ENCODE measurements at regions of chr14 and their contacts with region 1.

Region 1: DNA sequence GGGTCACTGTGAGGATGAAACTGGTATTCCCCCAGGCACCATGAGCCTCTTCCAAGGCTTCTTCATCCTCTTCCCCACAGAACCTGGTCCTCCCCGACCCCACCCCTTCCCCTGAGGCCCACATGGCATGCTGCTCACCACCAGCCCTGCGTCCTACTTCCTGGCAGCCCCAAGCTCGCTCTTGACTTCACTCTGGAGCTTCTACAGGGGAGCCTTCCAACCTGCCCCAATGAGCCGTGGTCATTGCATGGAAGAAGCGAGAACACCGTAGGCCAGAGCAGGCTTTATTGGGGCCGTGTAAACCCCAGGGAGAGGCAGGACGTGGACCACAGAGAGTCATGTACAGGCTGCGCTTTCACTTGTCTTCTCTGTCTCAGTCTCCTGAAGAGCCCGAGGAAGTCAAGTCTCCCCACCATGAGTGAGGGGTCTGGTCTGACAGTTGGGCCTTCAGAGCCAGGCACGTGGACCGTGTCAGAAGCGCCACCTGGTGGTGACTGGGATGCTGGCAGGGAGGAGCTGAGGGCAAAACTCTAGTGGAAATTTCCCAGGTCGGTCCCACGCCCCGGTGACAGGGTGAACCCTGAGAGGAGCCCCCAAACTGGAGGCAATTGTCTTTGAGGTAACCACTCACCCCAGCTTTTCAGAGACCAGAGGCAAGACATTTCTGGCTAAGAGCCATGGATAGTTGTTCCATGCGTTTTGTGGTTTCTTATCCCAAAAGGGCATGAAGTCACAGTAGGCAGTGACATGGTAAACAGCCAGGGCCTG is 17.5 kb downstream of the RPS6KL1 start:
- DNase-seq: peak; percentile 51 to 60
- ATAC-seq: peak; percentile 33 to 74; a peak in 3 of 6 replicates
- H3K4me3 ChIP-seq: no peak overlapping the region
- H3K27ac ChIP-seq: peak overlapping the region in 1 of 2 experiments; percentile 44; a peak in 1 of 6 replicates
- H3K4me1 ChIP-seq: no peaks in the 10 kb centered on the region; the same call in 2 of the 3 replicates
- CTCF ChIP-seq: peak; percentile 85
- EP300 ChIP-seq: no peak
- POLR2A ChIP-seq: no peak
- RAD21 ChIP-seq: peak; percentile 57 to 60; a peak in 4 of 5 replicates

Region 2: DNA sequence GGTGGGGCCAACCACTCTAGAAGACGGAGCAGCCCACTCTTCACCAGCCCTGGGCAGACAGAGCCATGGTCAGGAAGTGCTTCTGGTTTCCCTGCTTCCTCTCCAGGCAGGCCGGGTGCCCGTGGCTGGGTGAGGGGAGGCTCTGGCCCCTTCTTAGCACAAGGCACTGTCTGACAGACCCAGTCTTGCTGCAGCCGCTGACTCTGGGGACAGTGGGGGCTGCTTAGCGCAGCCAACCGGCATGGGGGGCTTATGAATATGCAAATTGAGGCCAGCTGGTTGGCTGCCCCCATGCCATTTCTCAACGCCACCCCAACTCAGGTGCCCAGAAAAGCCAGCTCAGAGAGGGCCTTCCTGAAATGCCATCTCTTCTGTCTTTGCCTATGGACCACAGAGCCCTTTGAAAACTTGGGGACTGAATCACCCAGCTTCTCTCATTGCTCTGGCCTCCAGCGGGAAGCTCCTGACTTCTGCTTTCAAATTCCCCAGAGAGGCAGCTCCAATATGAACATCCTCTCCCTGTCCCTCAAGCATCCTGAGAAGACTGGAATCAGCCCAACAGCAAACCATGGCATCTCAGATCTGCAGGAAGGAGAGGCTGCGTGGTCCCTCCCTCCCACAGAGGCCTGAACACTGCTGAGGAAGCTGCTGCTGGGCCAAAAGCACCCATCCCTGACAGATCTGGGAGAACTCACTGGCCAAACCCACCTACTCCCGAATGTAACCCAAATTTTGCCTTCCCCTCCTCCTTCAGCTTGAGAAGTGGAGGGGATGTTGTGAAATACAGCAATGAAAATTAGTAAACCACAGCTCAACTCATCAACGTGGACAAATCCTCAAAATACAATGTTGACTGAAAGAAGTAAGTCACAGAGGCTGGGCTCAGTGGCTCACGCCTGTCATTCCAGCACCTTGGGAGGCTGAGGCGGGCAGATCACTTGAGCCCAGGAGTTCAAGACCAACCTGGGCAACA is 29.3 kb before region 1 on chr14 and contains the start of gene PROX2:
- CTCF ChIA-PET with region 1: interaction called, 77 read pairs
- POLR2A ChIA-PET with region 1: no interaction called
- DNase-seq: no peak
- ATAC-seq: no peak
- H3K4me3 ChIP-seq: no peak within 1 kb of the TSS
- H3K27ac ChIP-seq: no peak within 1 kb of the TSS
- H3K4me1 ChIP-seq: peaks cover 16% of the 10 kb centered on the region
- CTCF ChIP-seq: no peak
- EP300 ChIP-seq: no peak
- POLR2A ChIP-seq: no peak
- RAD21 ChIP-seq: no peak
- polyA plus RNA-seq, gene PROX2: not detected in 2 replicates

Region 3: GRCh38 chr14:74893614-74894091 is 11.9 kb before region 1 on chr14:
- CTCF ChIA-PET with region 1: interaction called, 173 read pairs
- POLR2A ChIA-PET with region 1: interaction called, 3 read pairs
- DNase-seq: no peak
- ATAC-seq: no peak
- H3K4me3 ChIP-seq: no peak overlapping the region
- H3K27ac ChIP-seq: no peak overlapping the region
- H3K4me1 ChIP-seq: peaks cover 3% of the 10 kb centered on the region
- CTCF ChIP-seq: no peak
- EP300 ChIP-seq: no peak
- POLR2A ChIP-seq: no peak
- RAD21 ChIP-seq: no peak

Region 4: DNA sequence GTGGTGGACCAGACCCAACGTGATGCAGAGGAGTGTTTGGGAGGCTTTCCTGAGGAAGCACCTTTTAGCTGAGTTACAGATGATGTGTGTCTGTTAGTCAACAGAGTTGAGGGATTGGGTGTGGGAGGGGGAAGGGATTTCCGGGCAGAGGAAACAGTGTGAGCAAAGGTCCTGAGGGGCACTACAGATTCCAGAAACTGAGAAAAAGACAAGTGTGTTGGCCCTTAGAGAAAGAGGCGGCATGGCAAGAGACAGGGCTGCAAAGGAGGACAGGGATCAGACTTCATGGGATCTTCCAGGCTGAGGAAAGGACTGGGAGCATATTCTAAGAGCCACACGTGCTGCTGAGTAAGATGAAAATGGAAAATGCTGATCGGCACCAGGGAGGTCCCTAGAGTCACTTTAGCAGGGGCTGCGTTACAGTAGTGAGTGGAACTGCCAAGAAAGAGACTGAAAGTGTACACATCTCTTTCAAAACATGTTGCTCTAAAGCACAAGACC is 26.9 kb after region 1 on chr14:
- CTCF ChIA-PET with region 1: interaction called, 13 read pairs
- POLR2A ChIA-PET with region 1: no interaction called
- DNase-seq: no peak
- ATAC-seq: peak in 1 of 2 experiments; percentile 51; a peak in 3 of 6 replicates
- H3K4me3 ChIP-seq: no peak overlapping the region
- H3K27ac ChIP-seq: peak overlapping the region in 1 of 2 experiments; percentile 31; a peak in 1 of 6 replicates
- H3K4me1 ChIP-seq: peaks cover 3% of the 10 kb centered on the region; the same call in 1 of the 3 replicates
- CTCF ChIP-seq: no peak
- EP300 ChIP-seq: no peak
- POLR2A ChIP-seq: no peak
- RAD21 ChIP-seq: no peak

Region 5: GRCh38 chr14:74955229-74956026 is 49.9 kb after region 1 on chr14 and contains the start of gene PGF:
- CTCF ChIA-PET with region 1: interaction called, 13 read pairs
- POLR2A ChIA-PET with region 1: no interaction called
- DNase-seq: peak; percentile 30 to 50
- ATAC-seq: peak; percentile 77 to 89
- H3K4me3 ChIP-seq: peak within 1 kb of the TSS; percentile 60
- H3K27ac ChIP-seq: peak within 1 kb of the TSS; percentile 60 to 80; a peak in 5 of 6 replicates
- H3K4me1 ChIP-seq: peaks cover 11% of the 10 kb centered on the region
- CTCF ChIP-seq: no peak
- EP300 ChIP-seq: no peak
- POLR2A ChIP-seq: peak; percentile 64
- RAD21 ChIP-seq: no peak
- polyA plus RNA-seq, gene PGF: 0.52 and 0.63 TPM in 2 replicates

Measured in A549 (cell line).